ENCODE measurements at regions of chr1 and their contacts with region 1.

Region 1: DNA sequence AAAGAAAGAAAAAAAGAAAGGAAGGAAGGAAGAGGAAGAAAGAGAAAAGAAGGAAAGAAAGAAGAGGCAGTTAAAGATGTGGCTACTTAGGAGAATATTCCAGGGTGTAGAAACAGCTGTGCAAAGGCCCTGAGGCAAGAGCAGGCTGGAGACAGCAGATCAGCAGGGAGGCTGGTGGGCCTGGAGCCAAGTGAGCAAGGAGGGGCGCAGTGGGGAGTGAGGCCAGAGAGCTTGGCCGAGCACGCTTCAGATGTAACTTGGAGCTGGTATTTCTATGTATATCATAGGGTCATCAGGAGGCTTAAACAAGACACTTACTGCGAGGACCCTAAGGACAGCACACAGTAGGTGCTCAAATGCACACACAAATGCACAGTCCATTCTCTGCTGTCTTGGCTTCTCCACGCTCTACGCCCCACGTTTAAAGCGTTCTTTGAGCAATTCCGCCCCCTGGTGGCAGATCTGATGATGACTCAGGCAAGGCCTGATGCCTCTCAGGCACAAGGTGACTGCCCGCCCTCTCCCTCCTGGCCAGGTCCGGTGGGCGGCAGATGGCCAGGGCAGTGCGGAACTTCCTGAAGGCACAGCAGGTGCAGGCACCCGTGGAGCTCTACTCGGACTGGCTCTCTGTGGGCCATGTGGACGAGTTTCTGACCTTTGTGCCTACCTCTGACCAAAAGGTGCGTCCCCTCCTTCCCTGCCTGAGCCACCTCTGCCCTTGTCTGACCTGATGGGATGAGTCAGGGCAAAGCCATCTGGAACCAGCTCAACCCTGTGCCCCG is 11.9 kb upstream of the PADI3 start:
- DNase-seq: peak; percentile 19
- H3K4me3 ChIP-seq: no peak overlapping the region
- CTCF ChIP-seq: peak; percentile 81

Region 2: DNA sequence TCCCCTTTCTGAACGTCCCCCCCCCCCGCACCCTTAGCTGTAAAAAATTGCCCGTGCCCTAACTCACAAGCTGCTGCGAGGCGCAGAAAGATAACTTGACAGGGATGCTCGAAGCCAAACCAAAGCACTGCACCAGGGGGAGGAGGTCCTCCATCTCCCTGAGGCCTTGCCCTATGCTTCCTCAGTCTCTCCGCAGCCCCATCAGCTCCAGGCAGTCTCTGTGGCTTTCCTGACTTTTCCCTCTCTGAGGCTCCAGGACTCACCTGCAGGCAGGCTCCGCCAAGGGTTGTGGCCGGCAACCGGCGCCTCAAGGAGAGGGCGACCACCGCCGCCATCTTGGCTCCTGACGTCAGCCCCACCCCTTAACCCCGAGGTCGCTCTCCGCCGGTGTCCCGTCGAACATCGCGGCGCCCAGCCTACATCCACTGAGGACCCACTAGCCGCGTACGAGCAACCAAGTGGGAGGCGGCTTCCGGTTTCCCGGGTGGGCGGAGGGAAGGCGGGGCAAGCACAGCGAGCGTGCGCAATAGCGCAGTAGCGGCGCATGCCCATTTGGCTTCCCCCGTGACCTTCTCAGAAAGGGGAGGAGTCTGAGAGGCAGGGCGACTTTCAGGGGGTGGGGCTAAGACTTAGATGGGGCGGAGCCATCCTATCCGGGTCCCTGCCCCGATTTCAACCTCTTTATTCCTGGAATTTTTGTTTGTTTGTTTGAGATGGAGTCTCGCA is 183.1 kb before region 1 on chr1 and contains the start of gene SDHB:
- CTCF ChIA-PET with region 1: interaction called, 13 read pairs
- POLR2A ChIA-PET with region 1: no interaction called
- DNase-seq: peak; percentile 77
- H3K4me3 ChIP-seq: peak within 1 kb of the TSS; percentile 94
- CTCF ChIP-seq: no peak

Region 3: DNA sequence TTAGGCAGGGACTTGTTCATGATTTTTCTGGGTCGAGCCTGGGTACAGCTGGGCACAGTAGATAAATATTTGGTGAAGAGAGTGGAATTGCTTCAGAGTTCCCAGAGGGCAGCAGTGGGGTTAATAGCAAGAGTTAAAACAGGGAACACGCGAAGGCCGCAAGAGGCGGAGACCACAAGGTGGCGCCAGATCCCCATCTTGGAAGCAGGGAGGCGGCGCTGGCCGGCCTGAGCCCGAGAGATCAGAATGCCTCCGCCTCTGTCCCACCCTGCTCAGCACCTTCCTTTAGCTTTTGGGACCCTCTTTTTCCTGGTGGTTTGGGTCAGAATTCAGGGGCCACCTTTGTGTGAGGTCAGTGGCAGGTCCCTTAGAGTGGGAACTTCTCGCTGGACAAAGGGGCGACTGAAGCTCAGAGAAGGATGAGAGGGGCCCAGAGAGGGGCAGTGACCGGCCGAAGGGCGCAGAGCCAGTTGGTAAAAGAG is 111.2 kb before region 1 on chr1:
- CTCF ChIA-PET with region 1: interaction called, 669 read pairs
- POLR2A ChIA-PET with region 1: interaction called, 37 read pairs
- DNase-seq: no peak
- H3K4me3 ChIP-seq: no peak overlapping the region
- CTCF ChIP-seq: peak; percentile 97

Region 4: DNA sequence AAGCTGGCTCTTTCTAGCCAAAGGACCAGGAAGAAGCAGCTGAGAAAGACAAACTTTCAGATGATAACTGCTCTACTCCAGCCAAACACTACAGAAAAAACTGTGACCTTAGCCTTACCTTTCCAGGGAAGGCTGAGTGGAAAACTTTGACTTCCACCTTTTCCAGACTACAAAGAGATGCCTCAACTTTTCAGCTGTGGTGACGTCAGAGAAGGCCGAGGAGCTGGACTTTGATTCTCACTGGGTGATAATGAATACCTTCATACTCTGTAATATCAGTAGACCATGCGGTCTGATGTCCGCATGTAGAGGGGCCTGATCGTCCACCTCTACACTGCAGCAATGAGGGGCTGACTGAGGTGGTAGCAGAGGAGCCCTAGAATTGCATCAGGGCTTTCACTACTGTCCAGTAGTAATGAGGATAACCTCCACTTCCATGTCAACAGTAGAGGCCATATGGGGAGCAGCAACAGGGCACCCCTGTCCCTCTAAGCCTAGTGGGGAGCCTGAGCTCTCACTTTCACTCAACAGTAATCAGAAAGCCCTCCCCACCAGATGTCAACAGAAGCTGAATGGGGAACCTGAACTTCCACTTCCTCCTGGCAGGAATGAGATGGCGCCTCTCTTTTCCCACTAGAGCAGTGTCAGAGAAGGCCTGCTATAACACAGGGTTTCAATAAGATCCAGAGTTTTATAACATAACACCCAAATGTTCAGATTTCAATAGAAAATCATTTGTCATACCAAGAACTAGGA is 60.5 kb before region 1 on chr1:
- CTCF ChIA-PET with region 1: interaction called, 10 read pairs
- POLR2A ChIA-PET with region 1: no interaction called
- DNase-seq: no peak
- H3K4me3 ChIP-seq: no peak overlapping the region
- CTCF ChIP-seq: no peak

Region 5: GRCh38 chr1:17201201-17202021 is 35.6 kb before region 1 on chr1:
- CTCF ChIA-PET with region 1: interaction called, 13 read pairs
- POLR2A ChIA-PET with region 1: no interaction called
- DNase-seq: no peak
- H3K4me3 ChIP-seq: no peak overlapping the region
- CTCF ChIP-seq: no peak

Region 6: DNA sequence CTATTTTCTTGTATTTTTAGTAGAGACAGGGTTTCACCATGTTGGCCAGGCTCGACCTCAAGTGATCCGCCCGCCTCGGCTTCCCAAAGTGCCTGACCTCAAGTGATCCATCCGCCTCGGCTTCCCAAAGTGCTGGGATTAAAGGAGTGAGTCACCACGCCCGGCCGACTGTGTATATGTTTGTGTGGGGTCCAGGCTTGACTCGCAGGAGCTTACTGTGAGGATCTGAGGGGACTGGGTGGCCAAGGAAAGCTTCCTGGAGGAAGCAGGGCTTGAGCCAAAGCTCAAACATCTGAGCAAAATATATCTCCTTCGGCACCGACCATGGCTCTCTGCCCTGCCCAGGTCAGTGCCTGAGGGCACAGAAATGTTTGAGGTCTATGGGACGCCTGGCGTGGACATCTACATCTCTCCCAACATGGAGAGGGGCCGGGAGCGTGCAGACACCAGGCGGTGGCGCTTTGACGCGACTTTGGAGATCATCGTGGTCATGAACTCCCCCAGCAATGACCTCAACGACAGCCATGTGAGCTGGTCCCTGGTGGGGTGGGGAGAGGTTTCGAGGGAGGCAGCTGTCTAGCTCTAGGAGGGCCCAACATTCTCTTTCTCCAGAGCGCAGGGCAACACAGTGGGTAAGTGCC is 22.4 kb after region 1 on chr1:
- CTCF ChIA-PET with region 1: interaction called, 16 read pairs
- POLR2A ChIA-PET with region 1: no interaction called
- DNase-seq: no peak
- H3K4me3 ChIP-seq: no peak overlapping the region
- CTCF ChIP-seq: no peak

Region 7: GRCh38 chr1:17335821-17336710 is 99.1 kb after region 1 on chr1:
- CTCF ChIA-PET with region 1: interaction called, 20 read pairs
- POLR2A ChIA-PET with region 1: no interaction called
- DNase-seq: no peak
- H3K4me3 ChIP-seq: no peak overlapping the region
- CTCF ChIP-seq: peak; percentile 88